ENCODE measurements at regions of chr3 and their contacts with region 1.

Region 1: GRCh38 chr3:46549408-46549904 is 16.6 kb downstream of the LRRC2 start:
- DNase-seq: no peak
- ATAC-seq: no peak
- H3K4me3 ChIP-seq: no peak overlapping the region
- H3K27ac ChIP-seq: peak overlapping the region; percentile 34
- H3K4me1 ChIP-seq: peaks cover 33% of the 10 kb centered on the region
- H3K27me3 ChIP-seq: no peaks in the 10 kb centered on the region
- CTCF ChIP-seq: no peak

Region 2: GRCh38 chr3:46059432-46059831 is 490.0 kb before region 1 on chr3:
- intact Hi-C with region 1: no loop called
- DNase-seq: no peak
- ATAC-seq: no peak
- H3K4me3 ChIP-seq: no peak overlapping the region
- H3K27ac ChIP-seq: no peak overlapping the region
- H3K4me1 ChIP-seq: peaks cover 27% of the 10 kb centered on the region
- H3K27me3 ChIP-seq: no peaks in the 10 kb centered on the region
- CTCF ChIP-seq: no peak

Region 3: GRCh38 chr3:46500656-46501635 is 48.5 kb before region 1 on chr3:
- intact Hi-C with region 1: loop called in 1 of 2 experiments (anchors 5 kb)
- DNase-seq: no peak
- ATAC-seq: no peak
- H3K4me3 ChIP-seq: no peak overlapping the region
- H3K27ac ChIP-seq: peak overlapping the region; percentile 65
- H3K4me1 ChIP-seq: peaks cover 30% of the 10 kb centered on the region
- H3K27me3 ChIP-seq: no peaks in the 10 kb centered on the region
- CTCF ChIP-seq: no peak

Region 4: GRCh38 chr3:46585799-46586693 is 36.6 kb after region 1 on chr3:
- intact Hi-C with region 1: no loop called
- DNase-seq: no peak
- ATAC-seq: no peak
- H3K4me3 ChIP-seq: no peak overlapping the region
- H3K27ac ChIP-seq: no peak overlapping the region
- H3K4me1 ChIP-seq: no peaks in the 10 kb centered on the region
- H3K27me3 ChIP-seq: no peaks in the 10 kb centered on the region
- CTCF ChIP-seq: no peak

Region 5: DNA sequence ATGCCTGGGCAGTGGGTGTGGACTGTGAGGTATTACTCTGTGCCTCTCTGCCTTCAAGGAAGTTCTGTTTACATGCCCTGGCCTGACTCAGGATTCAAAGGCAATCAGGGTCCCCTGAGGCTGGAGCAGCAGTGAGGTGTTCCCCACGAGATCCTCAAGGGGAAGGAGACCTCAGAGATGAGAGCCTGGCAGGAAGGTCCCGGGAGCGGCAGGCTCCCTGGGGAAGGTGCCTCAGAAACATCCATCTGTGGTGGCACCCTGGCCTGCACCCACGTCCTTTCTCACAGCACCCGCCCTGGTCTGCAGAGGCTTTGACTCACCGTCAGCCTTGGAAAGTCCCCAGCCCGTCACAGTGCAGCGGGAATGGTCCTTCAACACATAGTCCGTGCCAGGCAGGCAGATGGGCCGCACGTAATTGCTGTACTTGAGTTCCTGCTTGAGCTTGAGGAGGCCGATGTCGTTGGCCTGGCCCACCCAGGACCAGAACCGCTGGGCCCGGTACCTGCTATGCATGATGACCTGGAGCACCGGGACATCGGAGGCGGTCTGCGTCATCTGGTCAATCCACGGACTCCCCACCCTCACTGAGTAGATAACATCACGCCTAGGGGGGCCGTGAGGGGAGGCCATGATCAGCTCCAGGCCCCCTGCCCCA is 164.6 kb after region 1 on chr3:
- intact Hi-C with region 1: no loop called
- DNase-seq: peak in 1 of 2 donors; percentile 40
- ATAC-seq: no peak
- H3K4me3 ChIP-seq: no peak overlapping the region
- H3K27ac ChIP-seq: no peak overlapping the region
- H3K4me1 ChIP-seq: peaks cover 7% of the 10 kb centered on the region
- H3K27me3 ChIP-seq: peaks cover 0 to 5% (median 3%) of the 10 kb centered on the region in 3 donors
- CTCF ChIP-seq: no peak